Activated naive CD4-positive, alpha-beta T cell treated with anti-CD3 and anti-CD28 coated beads for 36 hours (primary cell): ENCODE measurements at regions of chr16 and their contacts with region 1.

Region 1: GRCh38 chr16:50152807-50153452 is at the start of gene TENT4B:
- DNase-seq: peak; percentile 85
- H3K4me3 Mint-ChIP-seq: peak within 1 kb of the TSS; percentile 80
- H3K27ac Mint-ChIP-seq: peak within 1 kb of the TSS; percentile 93
- H3K4me1 Mint-ChIP-seq: peaks cover 34% of the 10 kb centered on the region
- H3K27me3 Mint-ChIP-seq: no peaks in the 10 kb centered on the region
- total RNA-seq, gene TENT4B: 17.9 to 18.4 TPM

Region 2: DNA sequence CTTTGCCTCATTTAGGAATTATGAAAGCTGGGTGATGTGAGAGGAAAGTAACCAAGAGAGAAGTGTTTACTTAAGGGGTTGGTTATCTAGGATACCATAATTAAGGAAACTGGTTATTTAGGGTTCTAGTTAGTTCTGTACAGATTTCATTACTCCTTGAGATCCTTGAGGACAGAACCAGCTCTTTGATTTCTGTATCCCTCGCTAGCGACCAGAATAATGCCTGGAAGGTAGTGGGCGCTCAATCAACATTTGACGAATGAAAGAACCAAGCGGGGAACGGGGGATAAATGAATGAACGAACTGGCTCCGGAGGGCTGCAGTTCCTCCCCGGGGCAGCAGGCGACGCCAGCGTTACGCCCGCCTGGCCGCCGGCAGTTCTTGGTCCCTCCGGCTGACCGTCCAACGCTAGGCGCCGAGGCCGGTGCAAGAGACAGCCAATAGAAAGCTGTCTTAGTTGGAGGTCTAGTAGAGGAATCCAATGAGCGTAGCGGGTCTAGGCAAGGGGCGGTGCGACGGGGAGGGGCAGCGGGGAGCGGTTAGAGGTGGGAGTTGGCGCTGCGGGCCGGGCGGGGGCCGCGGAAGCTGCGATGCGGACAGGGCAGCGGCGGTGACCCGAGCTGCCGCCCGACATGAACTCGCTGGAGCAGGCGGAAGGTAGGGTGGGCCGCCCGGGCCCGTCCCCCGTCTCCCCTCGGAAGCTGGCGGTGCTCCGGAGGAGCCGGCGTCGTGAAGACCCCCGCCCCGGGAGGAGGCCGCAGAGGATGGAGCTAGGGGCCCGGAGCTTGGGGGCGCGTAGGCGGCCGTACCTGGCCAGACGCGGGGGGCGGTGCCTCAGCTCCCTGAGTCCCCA is 128.0 kb before region 1 on chr16 and contains the start of gene CNEP1R1:
- CTCF ChIA-PET with region 1: interaction called, 6 read pairs
- intact Hi-C with region 1: loop called (anchors 1 kb)
- DNase-seq: peak; percentile 94
- H3K4me3 Mint-ChIP-seq: peak within 1 kb of the TSS; percentile 91
- H3K27ac Mint-ChIP-seq: peak within 1 kb of the TSS; percentile 82
- H3K4me1 Mint-ChIP-seq: peaks cover 22% of the 10 kb centered on the region
- H3K27me3 Mint-ChIP-seq: no peaks in the 10 kb centered on the region
- total RNA-seq, gene CNEP1R1: 28.2 to 30.9 TPM

Region 3: GRCh38 chr16:50079397-50080140 is 73.4 kb before region 1 on chr16:
- CTCF ChIA-PET with region 1: no interaction called
- intact Hi-C with region 1: no loop called
- DNase-seq: no peak
- H3K4me3 Mint-ChIP-seq: no peak overlapping the region
- H3K27ac Mint-ChIP-seq: no peak overlapping the region
- H3K4me1 Mint-ChIP-seq: peaks cover 12% of the 10 kb centered on the region
- H3K27me3 Mint-ChIP-seq: no peaks in the 10 kb centered on the region

Region 4: DNA sequence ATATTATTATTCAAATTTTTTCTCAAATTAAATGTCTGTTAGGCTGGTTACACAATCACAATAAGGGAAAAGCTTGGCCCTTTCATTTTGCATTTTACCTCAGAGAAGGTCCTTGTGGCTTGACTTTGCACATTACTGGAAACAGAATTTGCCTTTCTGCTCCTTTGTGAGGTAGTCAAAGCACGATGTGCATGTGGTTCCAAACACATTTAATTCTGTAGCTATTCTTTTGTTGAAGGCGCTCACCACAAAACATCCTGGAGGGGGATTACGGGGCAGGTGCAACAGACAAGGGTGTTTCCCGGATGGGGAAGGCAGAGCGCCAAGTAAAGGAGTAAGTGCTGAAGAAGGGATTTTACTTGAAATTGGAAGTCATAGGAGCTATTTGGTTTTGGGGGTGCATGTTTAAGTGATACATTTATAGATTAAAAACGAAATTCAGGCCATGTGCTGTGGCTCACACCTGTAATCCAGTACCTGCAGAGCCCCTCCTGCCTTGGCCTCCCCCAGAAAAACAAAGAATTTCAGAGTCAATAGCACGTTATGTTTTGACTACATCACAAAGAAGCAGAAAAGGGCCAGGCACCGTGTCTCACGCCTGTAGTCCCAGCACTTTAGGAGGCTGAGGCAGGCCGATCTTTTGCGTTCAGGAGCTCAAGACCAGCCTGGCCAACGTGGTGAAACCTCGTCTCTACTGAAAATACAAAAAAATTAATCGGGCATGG is 31.0 kb before region 1 on chr16:
- CTCF ChIA-PET with region 1: interaction called, 3 read pairs
- intact Hi-C with region 1: loop called (anchors 1 kb)
- DNase-seq: peak; percentile 93
- H3K4me3 Mint-ChIP-seq: peak overlapping the region; percentile 22
- H3K27ac Mint-ChIP-seq: peak overlapping the region; percentile 75
- H3K4me1 Mint-ChIP-seq: peaks cover 20% of the 10 kb centered on the region
- H3K27me3 Mint-ChIP-seq: no peaks in the 10 kb centered on the region

Region 5: GRCh38 chr16:50202926-50203624 is 50.1 kb after region 1 on chr16:
- CTCF ChIA-PET with region 1: interaction called, 4 read pairs
- intact Hi-C with region 1: loop called (anchors 2 kb)
- DNase-seq: no peak
- H3K4me3 Mint-ChIP-seq: no peak overlapping the region
- H3K27ac Mint-ChIP-seq: no peak overlapping the region
- H3K4me1 Mint-ChIP-seq: peaks cover 56% of the 10 kb centered on the region
- H3K27me3 Mint-ChIP-seq: no peaks in the 10 kb centered on the region

Region 6: DNA sequence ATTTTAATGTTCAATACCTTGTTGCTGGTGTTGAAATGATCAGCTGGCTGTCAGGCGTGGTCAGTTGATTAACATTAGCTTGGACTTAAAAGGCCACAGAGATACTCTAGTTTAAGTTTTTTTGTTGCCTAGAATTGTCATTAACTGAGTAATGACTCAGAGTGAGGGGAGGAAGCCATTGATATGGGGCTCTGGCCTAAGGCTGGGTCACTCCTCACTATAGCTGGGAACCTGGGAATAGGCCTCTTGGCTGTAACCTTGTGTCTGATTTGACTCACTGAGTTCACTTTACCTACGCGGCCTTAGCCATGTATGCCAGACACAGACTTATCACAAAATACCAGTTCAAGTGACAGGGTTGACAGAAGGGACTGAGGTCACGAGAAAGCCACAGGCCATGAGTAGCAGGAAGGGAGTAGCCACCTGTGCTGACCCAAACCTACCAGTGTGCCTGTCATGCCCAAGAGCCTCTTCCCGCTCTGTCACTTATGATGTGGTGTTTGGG is 75.5 kb after region 1 on chr16:
- CTCF ChIA-PET with region 1: no interaction called
- intact Hi-C with region 1: no loop called
- DNase-seq: no peak
- H3K4me3 Mint-ChIP-seq: no peak overlapping the region
- H3K27ac Mint-ChIP-seq: no peak overlapping the region
- H3K4me1 Mint-ChIP-seq: no peaks in the 10 kb centered on the region
- H3K27me3 Mint-ChIP-seq: no peaks in the 10 kb centered on the region

Region 7: GRCh38 chr16:50335196-50335958 is 182.4 kb after region 1 on chr16:
- CTCF ChIA-PET with region 1: no interaction called
- intact Hi-C with region 1: loop called (anchors 2 kb)
- DNase-seq: peak; percentile 73
- H3K4me3 Mint-ChIP-seq: peak overlapping the region; percentile 44
- H3K27ac Mint-ChIP-seq: peak overlapping the region; percentile 96
- H3K4me1 Mint-ChIP-seq: peaks cover 66% of the 10 kb centered on the region
- H3K27me3 Mint-ChIP-seq: no peaks in the 10 kb centered on the region